AG04449 (cell line): ENCODE measurements at regions of chr2 and their contacts with region 1.

Region 1: GRCh38 chr2:190887089-190887488 is 6.5 kb downstream of the GLS start:
- DNase-seq: no peak
- H3K4me3 ChIP-seq: no peak overlapping the region
- CTCF ChIP-seq: no peak

Region 2: DNA sequence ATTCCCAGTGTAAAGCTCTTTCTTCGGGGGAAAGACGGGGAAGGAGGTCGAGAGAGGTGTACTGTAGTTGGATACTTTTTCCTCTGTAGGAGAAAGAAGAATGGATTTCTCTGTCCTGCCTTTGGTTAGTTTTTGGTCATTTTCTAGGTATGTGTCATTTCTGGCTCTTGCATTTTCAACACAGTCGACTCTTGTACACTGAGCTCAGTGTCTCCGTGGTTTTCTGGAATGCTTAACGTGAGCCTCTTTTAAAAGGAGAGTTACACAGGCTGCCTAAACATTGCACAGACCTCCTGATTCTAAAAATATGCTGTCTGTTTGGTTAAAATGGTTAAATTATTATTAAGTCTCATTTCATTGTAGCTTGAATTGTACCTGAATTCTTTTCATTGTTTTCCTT is 28.3 kb before region 1 on chr2:
- CTCF ChIA-PET with region 1: interaction called, 7 read pairs
- POLR2A ChIA-PET with region 1: interaction called, 110 read pairs
- DNase-seq: peak; percentile 66
- H3K4me3 ChIP-seq: no peak overlapping the region
- CTCF ChIP-seq: no peak